SK-N-SH (cell line): ENCODE measurements at regions of chr22 and their contacts with region 1.

Region 1: GRCh38 chr22:20319745-20320658 is at the start of gene DGCR6L:
- DNase-seq: peak; percentile 98
- H3K4me3 ChIP-seq: peak within 1 kb of the TSS; percentile 89 to 94
- H3K27ac ChIP-seq: peak within 1 kb of the TSS; percentile 70 to 88
- H3K4me1 ChIP-seq: peaks cover 15 to 22% of the 10 kb centered on the region in 2 experiments; a peak in 3 of 4 replicates
- H3K27me3 ChIP-seq: no peaks in the 10 kb centered on the region
- CTCF ChIP-seq: no peak
- EP300 ChIP-seq: no peak
- RAD21 ChIP-seq: no peak
- polyA plus RNA-seq, gene DGCR6L: 53.9 and 59.8 TPM in 2 replicates

Region 2: GRCh38 chr22:20305931-20306645 is 13.9 kb before region 1 on chr22:
- CTCF ChIA-PET with region 1: interaction called, 10 read pairs
- POLR2A ChIA-PET with region 1: no interaction called
- DNase-seq: no peak
- H3K4me3 ChIP-seq: no peak overlapping the region
- H3K27ac ChIP-seq: no peak overlapping the region
- H3K4me1 ChIP-seq: peaks cover 0 to 21% of the 10 kb centered on the region in 2 experiments; a peak in 1 of 4 replicates
- H3K27me3 ChIP-seq: peaks cover 8% of the 10 kb centered on the region
- CTCF ChIP-seq: no peak
- EP300 ChIP-seq: no peak
- RAD21 ChIP-seq: no peak

Region 3: GRCh38 chr22:20393909-20394691 is 74.1 kb after region 1 on chr22 and contains the start of gene ZNF74:
- CTCF ChIA-PET with region 1: no interaction called
- POLR2A ChIA-PET with region 1: interaction called, 10 read pairs
- DNase-seq: peak; percentile 92
- H3K4me3 ChIP-seq: peak within 1 kb of the TSS; percentile 78 to 82
- H3K27ac ChIP-seq: peak within 1 kb of the TSS; percentile 42 to 90; a peak in 3 of 4 replicates
- H3K4me1 ChIP-seq: peaks cover 7 to 18% of the 10 kb centered on the region in 2 experiments; a peak in 3 of 4 replicates
- H3K27me3 ChIP-seq: no peaks in the 10 kb centered on the region
- CTCF ChIP-seq: no peak
- EP300 ChIP-seq: no peak
- RAD21 ChIP-seq: no peak
- polyA plus RNA-seq, gene ZNF74: 8.0 and 9.9 TPM in 2 replicates